Ascending aorta (tissue), 2 donors: ENCODE measurements at regions of chr14 and their contacts with region 1.

Region 1: GRCh38 chr14:63543000-63543825 is at the start of gene PPP2R5E:
- DNase-seq: peak; percentile 95 to 99
- H3K4me3 ChIP-seq: peak within 1 kb of the TSS; percentile 92
- H3K27ac ChIP-seq: peak within 1 kb of the TSS; percentile 87 to 91
- H3K4me1 ChIP-seq: peaks cover 0 to 16% of the 10 kb centered on the region in 2 donors
- H3K27me3 ChIP-seq: no peaks in the 10 kb centered on the region
- CTCF ChIP-seq: no peak
- total RNA-seq, gene PPP2R5E: 5.7 TPM

Region 2: DNA sequence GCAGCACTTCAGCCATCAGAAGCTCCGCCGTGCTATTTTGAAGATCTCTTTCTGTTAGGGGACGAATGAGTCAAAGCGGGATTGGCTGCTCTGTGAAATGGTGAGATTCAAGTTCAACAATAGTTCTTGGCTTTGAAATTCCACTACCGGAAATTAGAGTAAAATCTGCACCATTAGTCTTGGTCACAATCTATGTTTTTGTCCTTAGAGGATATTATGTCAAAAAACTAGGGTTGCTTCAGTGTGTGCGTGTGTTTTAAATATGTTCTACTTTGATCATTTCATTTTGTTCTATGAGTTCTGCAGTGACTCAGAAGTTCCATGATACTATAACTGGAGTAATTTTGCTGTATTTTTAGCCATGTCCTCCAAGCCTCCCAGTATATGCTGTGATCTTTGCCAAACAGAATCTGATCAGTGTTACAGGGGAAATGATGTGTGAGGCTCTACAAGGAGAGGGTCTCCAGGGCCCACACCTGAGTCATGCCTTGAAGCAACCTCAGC is 247.1 kb before region 1 on chr14:
- intact Hi-C with region 1: loop called (anchors 5 kb)
- DNase-seq: no peak
- H3K4me3 ChIP-seq: peak overlapping the region in 1 of 2 donors; percentile 50
- H3K27ac ChIP-seq: peak overlapping the region; percentile 77 to 82
- H3K4me1 ChIP-seq: no peaks in the 10 kb centered on the region
- H3K27me3 ChIP-seq: no peaks in the 10 kb centered on the region
- CTCF ChIP-seq: no peak

Region 3: DNA sequence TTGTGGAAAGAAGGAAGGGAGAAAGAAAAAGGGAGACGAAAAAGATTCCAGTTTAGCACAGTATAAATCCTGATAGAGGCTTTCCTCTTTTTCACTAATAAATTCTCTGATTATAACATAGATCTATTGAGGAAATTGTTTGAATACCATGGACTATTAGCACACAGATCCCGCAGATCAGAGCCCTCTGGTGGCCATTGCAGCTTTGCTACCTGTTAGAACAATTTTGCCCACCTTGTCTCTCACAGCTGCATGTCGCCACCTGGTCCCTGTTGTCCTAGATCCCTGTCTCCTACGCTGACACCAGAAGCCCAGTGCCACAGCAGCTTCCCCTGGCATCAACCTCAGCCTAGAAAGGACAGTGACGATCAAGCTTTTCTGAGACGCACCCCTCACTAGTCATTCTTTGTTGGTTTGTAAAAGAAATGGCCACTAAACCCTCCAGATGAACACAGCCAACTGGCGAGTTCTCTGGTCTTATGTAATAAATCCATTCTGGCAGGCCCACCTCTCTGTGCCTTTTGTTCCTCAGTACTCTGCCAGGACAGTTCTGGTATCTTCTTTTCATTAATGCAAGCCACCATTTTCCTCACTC is 234.4 kb before region 1 on chr14:
- intact Hi-C with region 1: no loop called
- DNase-seq: no peak
- H3K4me3 ChIP-seq: no peak overlapping the region
- H3K27ac ChIP-seq: no peak overlapping the region
- H3K4me1 ChIP-seq: no peaks in the 10 kb centered on the region
- H3K27me3 ChIP-seq: no peaks in the 10 kb centered on the region
- CTCF ChIP-seq: peak in 2 of 3 experiments; percentile 11 to 15

Region 4: GRCh38 chr14:63406333-63406732 is 136.9 kb before region 1 on chr14:
- intact Hi-C with region 1: loop called (anchors 1 kb)
- DNase-seq: no peak
- H3K4me3 ChIP-seq: peak overlapping the region in 1 of 2 donors; percentile 27
- H3K27ac ChIP-seq: peak overlapping the region in 1 of 2 donors; percentile 62
- H3K4me1 ChIP-seq: peaks cover 0 to 6% of the 10 kb centered on the region in 2 donors
- H3K27me3 ChIP-seq: no peaks in the 10 kb centered on the region
- CTCF ChIP-seq: no peak

Region 5: GRCh38 chr14:63483315-63483714 is 59.9 kb before region 1 on chr14:
- intact Hi-C with region 1: no loop called
- DNase-seq: no peak
- H3K4me3 ChIP-seq: no peak overlapping the region
- H3K27ac ChIP-seq: no peak overlapping the region
- H3K4me1 ChIP-seq: peaks cover 0 to 13% of the 10 kb centered on the region in 2 donors
- H3K27me3 ChIP-seq: no peaks in the 10 kb centered on the region
- CTCF ChIP-seq: no peak

Region 6: DNA sequence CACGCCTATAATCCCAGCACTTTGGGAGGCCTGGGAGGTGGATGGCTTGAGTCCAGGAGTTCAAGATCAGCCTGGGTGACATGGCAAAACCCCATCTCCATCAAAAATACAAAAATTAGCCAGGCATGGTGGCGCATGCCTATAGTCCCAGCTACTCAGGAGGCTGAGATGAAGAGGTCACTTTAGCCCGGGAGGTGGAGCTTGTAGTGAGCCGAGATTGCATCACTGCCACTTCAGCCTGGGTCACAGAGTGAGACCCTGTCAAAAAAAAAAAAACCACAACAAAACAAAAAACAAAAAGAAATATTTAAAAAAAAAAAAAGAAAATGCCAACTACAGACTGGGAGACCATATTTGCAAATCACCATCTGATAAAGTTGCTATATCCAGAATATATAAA is 81.0 kb after region 1 on chr14:
- intact Hi-C with region 1: no loop called
- DNase-seq: no peak
- H3K4me3 ChIP-seq: no peak overlapping the region
- H3K27ac ChIP-seq: no peak overlapping the region
- H3K4me1 ChIP-seq: no peaks in the 10 kb centered on the region
- H3K27me3 ChIP-seq: no peaks in the 10 kb centered on the region
- CTCF ChIP-seq: no peak

Region 7: DNA sequence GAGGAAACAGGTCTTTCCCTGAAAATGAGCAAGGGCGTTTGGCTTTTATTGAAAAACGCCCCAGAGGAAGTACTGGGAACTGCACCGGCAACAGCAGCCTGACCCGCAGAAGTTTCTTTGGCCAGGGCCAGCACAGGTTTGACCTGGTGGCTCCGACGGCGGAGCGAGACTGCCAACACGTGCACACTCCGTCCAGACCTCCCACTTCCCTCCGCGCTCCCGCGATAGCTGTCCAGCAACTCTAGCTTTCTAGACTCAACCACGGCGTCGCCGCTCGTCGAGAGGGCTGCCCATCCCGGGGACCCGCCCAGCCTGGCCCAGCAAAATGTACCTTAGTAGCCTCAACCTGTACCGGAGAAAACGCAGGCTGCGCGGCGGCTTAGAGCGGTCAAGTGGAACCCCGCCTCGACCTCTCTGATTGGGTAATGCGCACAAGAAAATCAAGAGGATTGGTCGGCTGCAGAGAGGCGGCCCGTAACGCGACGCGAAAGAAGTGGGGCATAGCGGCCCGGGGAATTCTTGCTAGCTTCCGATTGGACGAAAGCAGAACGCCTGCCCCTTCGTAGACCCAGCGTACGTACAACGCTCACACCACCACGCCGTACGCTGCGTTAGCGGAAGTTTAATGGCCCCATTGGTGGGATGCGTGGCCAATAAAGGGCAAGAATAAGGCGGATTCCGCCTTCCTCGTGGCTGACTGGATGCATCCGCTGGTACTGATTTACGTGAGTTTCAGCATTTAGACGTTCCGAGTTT is 98.4 kb after region 1 on chr14 and contains the start of gene WDR89:
- intact Hi-C with region 1: loop called (anchors 1 kb)
- DNase-seq: peak; percentile 94 to 99
- H3K4me3 ChIP-seq: peak within 1 kb of the TSS; percentile 79 to 83
- H3K27ac ChIP-seq: peak within 1 kb of the TSS; percentile 93 to 94
- H3K4me1 ChIP-seq: peaks cover 3 to 11% of the 10 kb centered on the region in 2 donors
- H3K27me3 ChIP-seq: no peaks in the 10 kb centered on the region
- CTCF ChIP-seq: peak; percentile 71 to 86 (median 76)
- total RNA-seq, gene WDR89: not detected

Region 8: GRCh38 chr14:64338616-64339316 is 795.6 kb after region 1 on chr14:
- intact Hi-C with region 1: loop called (anchors 10 kb)
- DNase-seq: peak; percentile 91 to 97
- H3K4me3 ChIP-seq: peak overlapping the region; percentile 69 to 73
- H3K27ac ChIP-seq: peak overlapping the region; percentile 68 to 73
- H3K4me1 ChIP-seq: peaks cover 0 to 2% of the 10 kb centered on the region in 2 donors
- H3K27me3 ChIP-seq: no peaks in the 10 kb centered on the region
- CTCF ChIP-seq: no peak